ENCODE measurements at regions of chrX and their contacts with region 1.

Region 1: DNA sequence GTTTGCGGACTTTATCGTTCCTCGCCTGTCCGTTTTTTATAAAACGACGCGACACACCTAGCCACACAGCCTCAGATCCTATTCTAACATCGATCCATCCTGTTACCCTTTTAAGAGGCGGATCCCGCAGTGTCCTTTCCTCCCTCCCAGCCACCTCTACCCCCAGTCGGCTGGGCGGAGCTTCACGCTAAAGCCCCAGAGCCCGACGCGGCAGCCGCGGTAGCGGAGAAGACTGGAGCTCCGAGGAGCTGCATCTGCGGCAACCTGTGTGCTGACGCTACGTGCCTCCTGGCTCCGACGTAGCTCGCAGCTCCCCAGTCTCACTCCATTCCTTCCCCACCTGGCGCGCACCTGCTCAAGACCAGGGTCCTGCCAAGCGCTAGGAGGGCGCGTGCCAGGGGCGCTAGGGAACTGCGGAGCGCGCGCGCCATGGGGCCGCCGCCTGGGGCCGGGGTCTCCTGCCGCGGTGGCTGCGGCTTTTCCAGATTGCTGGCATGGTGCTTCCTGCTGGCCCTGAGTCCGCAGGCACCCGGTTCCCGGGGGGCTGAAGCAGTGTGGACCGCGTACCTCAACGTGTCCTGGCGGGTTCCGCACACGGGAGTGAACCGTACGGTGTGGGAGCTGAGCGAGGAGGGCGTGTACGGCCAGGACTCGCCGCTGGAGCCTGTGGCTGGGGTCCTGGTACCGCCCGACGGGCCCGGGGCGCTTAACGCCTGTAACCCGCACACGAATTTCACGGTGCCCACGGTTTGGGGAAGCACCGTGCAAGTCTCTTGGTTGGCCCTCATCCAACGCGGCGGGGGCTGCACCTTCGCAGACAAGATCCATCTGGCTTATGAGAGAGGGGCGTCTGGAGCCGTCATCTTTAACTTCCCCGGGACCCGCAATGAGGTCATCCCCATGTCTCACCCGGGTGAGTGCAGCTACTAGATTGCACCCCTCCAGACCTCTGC is at the start of gene RNF128:
- DNase-seq: peak; percentile 16 to 42
- H3K4me3 ChIP-seq: peak within 1 kb of the TSS; percentile 71
- H3K27ac ChIP-seq: no peak within 1 kb of the TSS
- H3K4me1 ChIP-seq: no peaks in the 10 kb centered on the region; the same call in 1 of the 2 replicates
- H3K27me3 ChIP-seq: no peaks in the 10 kb centered on the region
- CTCF ChIP-seq: no peak
- total RNA-seq, gene RNF128: 0.17 TPM in 1 of 2 replicates, not detected in the other

Region 2: GRCh38 chrX:106894392-106894909 is 167.7 kb after region 1 on chrX:
- CTCF ChIA-PET with region 1: no interaction called
- POLR2A ChIA-PET with region 1: no interaction called
- intact Hi-C with region 1: no loop called
- DNase-seq: peak; percentile 56 to 68
- H3K4me3 ChIP-seq: no peak overlapping the region
- H3K27ac ChIP-seq: peak overlapping the region; percentile 62
- H3K4me1 ChIP-seq: peaks cover 35% of the 10 kb centered on the region
- H3K27me3 ChIP-seq: no peaks in the 10 kb centered on the region
- CTCF ChIP-seq: peak; percentile 86

Region 3: GRCh38 chrX:108245459-108245858 is 1518.7 kb after region 1 on chrX:
- CTCF ChIA-PET with region 1: no interaction called
- POLR2A ChIA-PET with region 1: interaction called, 11 read pairs
- intact Hi-C with region 1: no loop called
- DNase-seq: no peak
- H3K4me3 ChIP-seq: no peak overlapping the region
- H3K27ac ChIP-seq: no peak overlapping the region
- H3K4me1 ChIP-seq: no peaks in the 10 kb centered on the region
- H3K27me3 ChIP-seq: no peaks in the 10 kb centered on the region
- CTCF ChIP-seq: peak; percentile 46